ENCODE measurements at regions of chr6 and their contacts with region 1.

Region 1: GRCh38 chr6:147063469-147064031 is 140.7 kb upstream of the STXBP5 start:
- DNase-seq: no peak
- H3K4me3 Mint-ChIP-seq: no peak overlapping the region
- H3K27ac Mint-ChIP-seq: no peak overlapping the region
- H3K4me1 Mint-ChIP-seq: peaks cover 6% of the 10 kb centered on the region
- H3K27me3 Mint-ChIP-seq: no peaks in the 10 kb centered on the region

Region 2: GRCh38 chr6:147274053-147274452 is 210.5 kb after region 1 on chr6:
- CTCF ChIA-PET with region 1: no interaction called
- intact Hi-C with region 1: loop called (anchors 5 kb)
- DNase-seq: no peak
- H3K4me3 Mint-ChIP-seq: no peak overlapping the region
- H3K27ac Mint-ChIP-seq: no peak overlapping the region
- H3K4me1 Mint-ChIP-seq: peaks cover 5% of the 10 kb centered on the region
- H3K27me3 Mint-ChIP-seq: no peaks in the 10 kb centered on the region